ENCODE measurements at regions of chr1 and their contacts with region 1.

Region 1: GRCh38 chr1:35747938-35748702 is 21.7 kb downstream of the CLSPN start:
- DNase-seq: peak; percentile 9
- ATAC-seq: no peak
- H3K4me3 ChIP-seq: no peak overlapping the region
- H3K27ac ChIP-seq: no peak overlapping the region
- H3K4me1 ChIP-seq: no peaks in the 10 kb centered on the region
- H3K27me3 ChIP-seq: no peaks in the 10 kb centered on the region
- CTCF ChIP-seq: no peak

Region 2: DNA sequence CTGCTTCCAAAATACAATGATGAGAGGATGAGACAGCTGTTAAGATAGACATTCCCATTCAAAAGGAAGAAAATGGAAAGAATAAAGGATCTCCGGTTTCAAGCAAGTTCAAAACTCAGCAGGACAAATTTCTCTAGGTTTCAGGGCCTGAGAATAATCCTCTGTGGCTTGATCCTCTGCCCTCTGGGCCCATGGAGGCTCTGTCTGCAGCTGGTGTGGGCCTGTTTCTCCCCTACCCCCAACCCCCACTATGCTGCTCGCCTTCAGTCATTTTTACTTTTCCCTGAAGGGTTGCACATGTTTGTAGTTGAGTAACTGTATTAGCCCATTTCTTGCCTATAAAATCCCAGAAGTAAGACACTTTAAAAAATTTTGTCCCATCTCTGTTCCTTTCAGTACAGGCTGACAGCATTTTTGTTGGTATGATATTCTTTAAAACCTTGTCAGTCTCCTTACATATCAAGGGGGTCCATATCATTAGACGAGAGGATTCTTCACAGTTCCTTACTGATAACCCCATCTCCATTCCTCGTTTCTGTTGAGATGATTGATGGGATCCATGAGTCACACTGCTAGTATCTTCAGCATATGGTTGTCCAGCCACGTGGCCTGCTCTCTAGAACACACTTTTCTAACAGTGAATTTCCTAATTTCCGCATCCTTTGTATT is 469.1 kb before region 1 on chr1:
- CTCF ChIA-PET with region 1: no interaction called
- POLR2A ChIA-PET with region 1: no interaction called
- intact Hi-C with region 1: no loop called
- DNase-seq: no peak
- ATAC-seq: no peak
- H3K4me3 ChIP-seq: no peak overlapping the region
- H3K27ac ChIP-seq: no peak overlapping the region
- H3K4me1 ChIP-seq: no peaks in the 10 kb centered on the region
- H3K27me3 ChIP-seq: no peaks in the 10 kb centered on the region
- CTCF ChIP-seq: no peak

Region 3: DNA sequence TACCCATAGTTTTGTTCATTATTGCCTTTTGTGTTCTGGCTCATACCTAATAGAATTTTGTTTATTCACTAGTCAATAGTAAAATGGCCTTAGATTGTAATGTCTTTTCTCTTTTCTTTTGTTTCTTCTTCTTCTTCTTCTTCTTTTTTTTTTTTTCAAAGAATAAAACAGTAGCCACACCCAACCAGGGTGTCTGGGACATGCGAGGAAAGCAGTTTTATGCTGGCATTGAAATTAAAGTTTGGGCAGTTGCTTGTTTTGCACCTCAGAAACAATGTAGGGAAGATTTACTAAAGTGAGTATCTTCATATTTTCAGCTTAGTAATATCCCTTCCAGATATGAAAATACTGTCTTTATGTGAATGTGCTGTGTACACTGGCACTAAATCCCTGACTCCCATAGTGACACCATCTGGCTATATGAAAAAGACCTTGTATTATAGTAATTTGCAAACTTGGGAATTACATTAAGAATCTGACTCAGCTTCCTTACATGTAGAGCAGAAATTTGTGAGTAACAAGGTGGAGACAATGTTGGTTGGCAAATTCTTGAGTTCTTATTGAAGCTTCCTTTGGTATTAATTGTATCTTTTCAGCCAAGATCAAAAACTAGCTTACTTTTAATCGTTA is 84.3 kb after region 1 on chr1:
- CTCF ChIA-PET with region 1: no interaction called
- POLR2A ChIA-PET with region 1: interaction called, 24 read pairs
- intact Hi-C with region 1: no loop called
- DNase-seq: peak; percentile 9
- ATAC-seq: peak; percentile 57; the same call in 1 of the 2 replicates
- H3K4me3 ChIP-seq: no peak overlapping the region
- H3K27ac ChIP-seq: no peak overlapping the region
- H3K4me1 ChIP-seq: no peaks in the 10 kb centered on the region
- H3K27me3 ChIP-seq: no peaks in the 10 kb centered on the region
- CTCF ChIP-seq: no peak